Heart right ventricle (tissue), 16 donors: ENCODE measurements at regions of chr17 and their contacts with region 1.

Region 1: GRCh38 chr17:3944485-3945388 is 19.5 kb downstream of the ATP2A3 start:
- DNase-seq: peak in 1 of 2 donors; percentile 81
- ATAC-seq: peak; percentile 78 to 98 (median 94)
- H3K4me3 ChIP-seq: peak overlapping the region in 9 of 10 donors; percentile 27 to 51 (median 39)
- H3K27ac ChIP-seq: peak overlapping the region in 5 of 10 donors; percentile 22 to 41 (median 41)
- H3K4me1 ChIP-seq: peaks cover 0 to 19% (median 11%) of the 10 kb centered on the region in 9 donors
- H3K27me3 ChIP-seq: no peaks in the 10 kb centered on the region
- CTCF ChIP-seq: no peak

Region 2: GRCh38 chr17:3980381-3981014 is 35.8 kb after region 1 on chr17:
- intact Hi-C with region 1: no loop called
- DNase-seq: no peak
- ATAC-seq: no peak
- H3K4me3 ChIP-seq: no peak overlapping the region
- H3K27ac ChIP-seq: no peak overlapping the region
- H3K4me1 ChIP-seq: peaks cover 8 to 58% (median 35%) of the 10 kb centered on the region in 9 donors
- H3K27me3 ChIP-seq: no peaks in the 10 kb centered on the region
- CTCF ChIP-seq: no peak

Region 3: GRCh38 chr17:3990386-3991127 is 45.8 kb after region 1 on chr17:
- intact Hi-C with region 1: loop called in 1 of 10 experiments (anchors 5 kb)
- DNase-seq: no peak
- ATAC-seq: no peak
- H3K4me3 ChIP-seq: no peak overlapping the region
- H3K27ac ChIP-seq: peak overlapping the region in 3 of 10 donors; percentile 6 to 72 (median 30)
- H3K4me1 ChIP-seq: peaks cover 3 to 54% (median 18%) of the 10 kb centered on the region in 9 donors
- H3K27me3 ChIP-seq: peaks cover 0 to 4% (median 0%) of the 10 kb centered on the region in 7 donors
- CTCF ChIP-seq: no peak

Region 4: GRCh38 chr17:4017377-4017776 is 72.6 kb after region 1 on chr17:
- intact Hi-C with region 1: no loop called
- DNase-seq: no peak
- ATAC-seq: peak in 3 of 8 donors; percentile 12 to 36 (median 33)
- H3K4me3 ChIP-seq: no peak overlapping the region
- H3K27ac ChIP-seq: no peak overlapping the region
- H3K4me1 ChIP-seq: no peaks in the 10 kb centered on the region
- H3K27me3 ChIP-seq: no peaks in the 10 kb centered on the region
- CTCF ChIP-seq: peak in 3 of 9 donors; percentile 8 to 14 (median 8)